Activated CD8-positive, alpha-beta memory T cell treated with anti-CD3 and anti-CD28 coated beads, Interleukin-2, amount 10 ng/mL, durations not matched to agents 7 days and 5 days (primary cell): ENCODE measurements at regions of chr16 and their contacts with region 1.

Region 1: GRCh38 chr16:74862741-74863244 is 88.2 kb upstream of the FA2H start:
- DNase-seq: no peak
- ATAC-seq: peak; percentile 23
- H3K4me3 Mint-ChIP-seq: no peak overlapping the region
- H3K27ac Mint-ChIP-seq: no peak overlapping the region
- H3K4me1 Mint-ChIP-seq: peaks cover 6% of the 10 kb centered on the region
- H3K27me3 Mint-ChIP-seq: no peaks in the 10 kb centered on the region

Region 2: GRCh38 chr16:74709441-74709877 is 153.3 kb before region 1 on chr16:
- CTCF ChIA-PET with region 1: interaction called, 25 read pairs
- DNase-seq: peak; percentile 85
- ATAC-seq: peak; percentile 99
- H3K4me3 Mint-ChIP-seq: no peak overlapping the region
- H3K27ac Mint-ChIP-seq: no peak overlapping the region
- H3K4me1 Mint-ChIP-seq: peaks cover 11% of the 10 kb centered on the region
- H3K27me3 Mint-ChIP-seq: peaks cover 3% of the 10 kb centered on the region

Region 3: GRCh38 chr16:74813109-74813641 is 49.6 kb before region 1 on chr16:
- CTCF ChIA-PET with region 1: interaction called, 33 read pairs
- DNase-seq: peak; percentile 75
- ATAC-seq: peak; percentile 100
- H3K4me3 Mint-ChIP-seq: no peak overlapping the region
- H3K27ac Mint-ChIP-seq: no peak overlapping the region
- H3K4me1 Mint-ChIP-seq: no peaks in the 10 kb centered on the region
- H3K27me3 Mint-ChIP-seq: peaks cover 4% of the 10 kb centered on the region